PC-9 (cell line): ENCODE measurements at regions of chr6 and their contacts with region 1.

Region 1: DNA sequence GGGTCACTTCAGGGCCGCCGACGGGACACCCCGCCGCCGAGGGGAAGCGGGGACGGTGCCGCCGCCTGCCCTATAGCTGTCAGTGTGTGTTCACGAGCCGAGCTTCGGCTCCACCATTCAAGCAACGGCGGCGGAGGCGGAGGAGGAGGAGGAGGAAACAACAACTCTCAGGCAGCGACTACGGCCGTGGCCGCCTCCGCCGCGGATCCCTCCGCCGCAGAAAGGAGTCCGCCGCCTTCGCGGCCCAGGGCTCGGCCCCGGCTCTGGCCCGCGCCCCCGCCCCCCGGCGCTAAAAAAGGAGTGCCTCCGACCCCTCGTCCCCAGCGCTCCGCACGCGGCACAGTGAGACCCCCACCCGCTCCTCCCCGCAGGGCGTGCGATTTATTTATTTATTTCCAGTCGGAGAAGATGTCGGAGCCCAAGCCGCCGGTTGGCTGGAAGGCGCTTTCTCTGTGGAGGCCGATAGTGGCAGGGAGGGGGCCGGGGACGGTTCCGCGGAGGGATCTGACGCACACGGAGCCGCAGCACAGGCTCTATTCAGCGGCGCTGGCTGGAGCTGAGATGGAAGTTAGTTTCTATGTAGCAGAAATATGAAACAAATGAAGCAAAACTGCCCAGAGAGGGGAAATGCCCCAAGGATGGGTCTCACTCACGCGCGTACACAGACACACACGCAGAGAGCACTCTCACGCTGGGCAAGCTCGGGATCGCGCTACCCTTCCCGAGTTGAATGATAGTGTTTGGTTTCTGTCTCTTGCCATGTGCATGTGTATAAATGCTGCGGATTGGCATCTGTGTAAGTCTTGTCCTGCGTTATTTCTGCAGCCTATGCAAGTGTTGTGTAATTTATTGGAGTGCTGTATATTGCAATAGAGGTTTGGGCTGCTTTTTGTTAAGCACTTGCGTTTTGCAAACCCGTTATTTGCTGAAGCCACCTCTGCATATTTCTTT is at the start of gene PHIP:
- DNase-seq: peak; percentile 71 to 89
- H3K4me3 ChIP-seq: peak within 1 kb of the TSS; percentile 89
- H3K27ac ChIP-seq: peak within 1 kb of the TSS; percentile 69
- H3K4me1 ChIP-seq: peaks cover 22% of the 10 kb centered on the region; the same call in 1 of the 2 replicates
- H3K27me3 ChIP-seq: no peaks in the 10 kb centered on the region
- CTCF ChIP-seq: no peak
- total RNA-seq, gene PHIP: 20.6 and 29.0 TPM in 2 replicates

Region 2: DNA sequence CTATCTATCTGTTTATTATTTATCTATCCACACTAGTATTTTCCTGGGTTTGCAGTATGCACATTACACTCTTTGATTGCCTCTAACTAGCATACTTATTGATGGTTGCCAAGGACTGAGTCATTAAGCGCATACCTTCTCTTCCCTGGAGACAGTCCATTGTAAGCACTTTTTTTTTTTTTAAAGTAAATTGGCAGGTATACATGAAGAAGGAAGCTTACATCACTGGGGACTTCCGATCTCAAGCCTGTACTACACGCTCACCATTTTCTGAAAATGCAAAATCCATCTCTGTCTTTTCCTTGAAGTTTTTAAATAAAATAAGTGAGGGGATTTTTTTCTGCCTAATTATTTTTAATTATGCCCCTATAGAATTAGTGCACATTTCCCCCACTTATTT is 92.6 kb after region 1 on chr6:
- CTCF ChIA-PET with region 1: no interaction called
- POLR2A ChIA-PET with region 1: no interaction called
- intact Hi-C with region 1: loop called (anchors 5 kb)
- DNase-seq: no peak
- H3K4me3 ChIP-seq: no peak overlapping the region
- H3K27ac ChIP-seq: no peak overlapping the region
- H3K4me1 ChIP-seq: no peaks in the 10 kb centered on the region
- H3K27me3 ChIP-seq: no peaks in the 10 kb centered on the region
- CTCF ChIP-seq: no peak

Region 3: DNA sequence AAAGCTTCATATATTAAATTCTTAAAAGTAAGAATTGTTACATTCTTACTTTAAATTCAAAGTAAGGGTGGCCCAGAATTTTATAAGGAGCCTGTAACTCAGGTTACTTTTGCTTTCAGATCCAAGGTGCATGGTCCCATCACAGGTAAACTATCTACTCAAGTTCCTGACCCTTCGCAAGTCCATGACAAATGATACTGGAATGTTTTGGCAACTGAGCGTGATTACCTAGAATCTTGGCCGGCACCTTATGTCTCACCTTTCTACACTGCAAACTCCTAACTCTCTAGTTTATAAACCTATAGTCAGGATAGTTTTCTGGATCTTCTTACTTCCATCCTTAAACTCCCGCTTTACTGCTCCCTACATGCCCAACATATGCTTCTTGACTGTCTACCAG is 224.0 kb after region 1 on chr6:
- CTCF ChIA-PET with region 1: no interaction called
- POLR2A ChIA-PET with region 1: no interaction called
- intact Hi-C with region 1: loop called (anchors 2 kb)
- DNase-seq: peak; percentile 48 to 84
- H3K4me3 ChIP-seq: no peak overlapping the region
- H3K27ac ChIP-seq: peak overlapping the region; percentile 65
- H3K4me1 ChIP-seq: peaks cover 37% of the 10 kb centered on the region
- H3K27me3 ChIP-seq: no peaks in the 10 kb centered on the region
- CTCF ChIP-seq: no peak

Region 4: GRCh38 chr6:79440598-79440997 is 362.2 kb after region 1 on chr6:
- CTCF ChIA-PET with region 1: no interaction called
- POLR2A ChIA-PET with region 1: no interaction called
- intact Hi-C with region 1: no loop called
- DNase-seq: no peak
- H3K4me3 ChIP-seq: no peak overlapping the region
- H3K27ac ChIP-seq: no peak overlapping the region
- H3K4me1 ChIP-seq: no peaks in the 10 kb centered on the region
- H3K27me3 ChIP-seq: no peaks in the 10 kb centered on the region
- CTCF ChIP-seq: no peak

Region 5: DNA sequence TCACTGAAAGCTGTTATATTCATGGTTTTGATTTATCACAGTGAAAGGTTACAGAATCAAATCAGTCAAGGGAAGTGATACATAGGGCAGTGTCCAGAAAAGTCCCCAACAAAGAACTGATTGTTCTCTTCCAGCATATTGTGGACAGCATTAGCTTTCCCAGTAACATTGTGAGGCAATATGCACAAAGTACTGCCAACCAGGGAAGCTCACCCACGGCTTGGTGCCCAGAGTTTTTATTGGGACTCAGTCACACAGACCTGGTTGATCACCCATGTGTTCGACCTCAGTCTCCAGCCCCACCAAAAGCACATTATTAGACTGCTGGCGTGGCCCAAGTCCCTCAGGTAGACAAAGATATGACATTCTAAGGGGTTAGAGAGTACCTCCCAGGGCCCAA is 382.9 kb after region 1 on chr6:
- CTCF ChIA-PET with region 1: no interaction called
- POLR2A ChIA-PET with region 1: interaction called, 12 read pairs
- intact Hi-C with region 1: loop called (anchors 2 kb)
- DNase-seq: no peak
- H3K4me3 ChIP-seq: no peak overlapping the region
- H3K27ac ChIP-seq: no peak overlapping the region
- H3K4me1 ChIP-seq: peaks cover 18% of the 10 kb centered on the region
- H3K27me3 ChIP-seq: no peaks in the 10 kb centered on the region
- CTCF ChIP-seq: no peak

Region 6: DNA sequence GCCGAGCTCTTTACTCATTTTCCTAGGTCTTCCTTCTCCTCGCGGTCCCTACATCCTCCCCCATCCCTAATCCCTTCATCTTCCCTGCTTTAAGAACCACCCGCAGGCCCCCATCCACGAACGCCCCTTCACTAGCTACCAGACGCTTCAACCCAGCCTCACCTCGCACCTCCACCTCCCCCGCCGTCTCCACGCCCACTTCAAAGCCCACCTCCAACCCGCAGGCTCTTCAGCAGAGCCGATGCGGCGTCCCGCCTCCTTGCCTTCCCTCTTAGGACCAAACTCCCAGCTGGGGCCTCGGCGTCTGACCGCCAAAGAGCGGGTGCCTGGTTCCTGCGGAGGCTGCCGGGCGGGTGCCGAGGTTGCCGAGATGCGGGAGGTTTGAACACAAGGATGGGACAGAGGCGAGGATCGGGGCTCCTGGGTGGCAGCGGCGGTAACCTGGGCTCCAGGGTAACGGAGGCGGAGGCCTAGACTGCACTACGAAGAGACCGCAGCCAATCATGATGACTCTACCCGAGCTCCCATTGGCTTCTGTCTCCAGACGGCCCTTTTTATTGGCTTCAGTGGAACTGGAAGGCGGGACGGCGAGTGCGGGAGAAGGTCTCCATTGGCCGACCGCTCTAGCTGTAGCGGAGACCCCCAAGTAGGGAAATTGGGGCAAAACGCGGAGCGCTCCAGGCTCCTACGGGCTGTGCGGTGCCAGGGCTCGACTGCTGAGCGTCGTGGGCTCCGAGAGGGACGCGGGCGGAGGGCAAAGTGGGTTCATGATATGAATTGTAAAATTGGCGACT is 458.8 kb after region 1 on chr6 and contains the start of gene LCA5:
- CTCF ChIA-PET with region 1: no interaction called
- POLR2A ChIA-PET with region 1: interaction called, 3 read pairs
- intact Hi-C with region 1: loop called (anchors 5 kb)
- DNase-seq: peak; percentile 88 to 90
- H3K4me3 ChIP-seq: peak within 1 kb of the TSS; percentile 82
- H3K27ac ChIP-seq: peak within 1 kb of the TSS; percentile 52
- H3K4me1 ChIP-seq: no peaks in the 10 kb centered on the region
- H3K27me3 ChIP-seq: no peaks in the 10 kb centered on the region
- CTCF ChIP-seq: no peak
- total RNA-seq, gene LCA5: 4.8 and 5.4 TPM in 2 replicates

Region 7: GRCh38 chr6:79713701-79714322 is 635.5 kb after region 1 on chr6:
- CTCF ChIA-PET with region 1: no interaction called
- POLR2A ChIA-PET with region 1: no interaction called
- intact Hi-C with region 1: loop called (anchors 10 kb)
- DNase-seq: peak in 1 of 2 experiments; percentile 45
- H3K4me3 ChIP-seq: no peak overlapping the region
- H3K27ac ChIP-seq: no peak overlapping the region
- H3K4me1 ChIP-seq: no peaks in the 10 kb centered on the region
- H3K27me3 ChIP-seq: no peaks in the 10 kb centered on the region
- CTCF ChIP-seq: peak; percentile 75

Region 8: DNA sequence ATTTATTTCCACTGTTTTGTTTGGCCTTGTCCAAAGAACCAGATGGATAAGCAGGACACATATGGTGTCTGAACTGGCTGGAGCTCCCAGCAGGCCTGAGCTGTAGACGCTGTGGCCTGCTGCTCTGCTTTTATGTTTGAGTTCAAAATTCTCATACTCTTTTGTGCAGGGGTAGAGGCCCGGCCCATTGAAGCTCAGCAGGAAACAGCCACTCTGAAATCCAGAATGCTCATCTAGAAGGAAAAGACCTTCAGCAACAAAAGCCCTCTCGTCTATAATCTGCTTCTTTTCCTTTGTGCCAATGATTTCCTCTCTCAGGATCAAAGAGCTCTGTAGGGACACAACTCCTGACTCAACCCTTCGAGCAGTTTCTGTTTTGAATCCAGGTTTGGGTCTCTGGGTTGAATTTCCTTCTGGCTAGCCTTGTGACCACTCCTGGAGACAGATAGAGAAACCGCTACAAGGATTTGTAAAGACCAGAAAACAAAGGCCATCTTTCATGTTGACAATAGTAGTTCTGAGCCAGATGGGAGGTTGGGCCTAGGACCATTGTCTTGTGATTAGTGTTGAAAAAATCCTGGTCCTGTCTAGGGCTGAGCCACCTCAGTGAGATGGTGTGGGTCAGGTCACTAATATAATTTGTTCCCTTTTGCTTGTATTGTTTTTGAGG is 1474.9 kb after region 1 on chr6:
- CTCF ChIA-PET with region 1: no interaction called
- POLR2A ChIA-PET with region 1: no interaction called
- intact Hi-C with region 1: no loop called
- DNase-seq: no peak
- H3K4me3 ChIP-seq: no peak overlapping the region
- H3K27ac ChIP-seq: no peak overlapping the region
- H3K4me1 ChIP-seq: no peaks in the 10 kb centered on the region
- H3K27me3 ChIP-seq: no peaks in the 10 kb centered on the region
- CTCF ChIP-seq: no peak